Ovary (tissue), 10 donors: ENCODE measurements at regions of chr17 and their contacts with region 1.

Region 1: DNA sequence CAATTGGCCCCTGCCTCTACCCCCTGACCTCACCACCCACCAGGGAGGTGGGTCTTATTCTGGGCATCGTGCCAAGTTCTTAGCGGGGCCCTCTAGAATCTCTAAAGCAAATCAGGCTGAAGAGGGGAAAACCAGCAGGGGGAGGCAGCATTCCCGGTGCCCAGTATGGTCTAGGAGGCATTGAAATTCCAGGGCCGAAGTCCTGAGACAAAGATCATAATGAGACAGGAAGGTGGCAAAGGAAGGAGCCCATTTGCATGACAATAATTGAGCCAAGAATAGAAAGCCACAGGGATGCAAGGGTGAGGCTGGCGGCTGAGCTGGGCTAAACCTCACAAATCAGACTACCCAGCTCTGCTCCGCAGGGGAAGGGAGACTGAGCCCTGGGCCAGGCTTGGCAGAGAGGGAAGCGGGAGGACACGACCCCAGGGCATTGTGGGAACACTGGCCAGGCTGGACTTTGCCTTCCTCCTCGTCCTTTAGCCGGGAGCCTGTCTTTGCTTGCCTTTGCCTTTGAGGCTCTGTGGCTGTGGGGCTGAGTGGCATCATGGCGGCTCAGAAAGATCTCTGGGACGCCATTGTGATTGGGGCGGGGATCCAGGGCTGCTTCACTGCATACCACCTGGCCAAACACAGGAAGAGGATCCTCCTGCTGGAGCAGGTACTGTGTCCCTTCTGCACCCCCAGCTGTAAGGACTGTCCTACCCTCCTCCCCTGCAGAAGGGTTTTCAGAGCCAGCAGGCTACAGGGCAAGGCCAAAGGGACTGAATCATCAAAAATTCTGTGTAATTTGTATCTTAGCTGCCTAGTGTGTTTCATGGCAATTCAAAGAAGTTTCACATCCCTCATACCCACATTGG is at the start of gene PIPOX:
- DNase-seq: no peak
- H3K4me3 ChIP-seq: no peak within 1 kb of the TSS
- H3K27ac ChIP-seq: no peak within 1 kb of the TSS
- H3K4me1 ChIP-seq: peaks cover 3% of the 10 kb centered on the region
- H3K27me3 ChIP-seq: no peaks in the 10 kb centered on the region
- CTCF ChIP-seq: no peak
- EP300 ChIP-seq: no peak
- POLR2A ChIP-seq: no peak
- total RNA-seq, gene PIPOX: 1.3 to 4.9 (median 2.1) TPM

Region 2: DNA sequence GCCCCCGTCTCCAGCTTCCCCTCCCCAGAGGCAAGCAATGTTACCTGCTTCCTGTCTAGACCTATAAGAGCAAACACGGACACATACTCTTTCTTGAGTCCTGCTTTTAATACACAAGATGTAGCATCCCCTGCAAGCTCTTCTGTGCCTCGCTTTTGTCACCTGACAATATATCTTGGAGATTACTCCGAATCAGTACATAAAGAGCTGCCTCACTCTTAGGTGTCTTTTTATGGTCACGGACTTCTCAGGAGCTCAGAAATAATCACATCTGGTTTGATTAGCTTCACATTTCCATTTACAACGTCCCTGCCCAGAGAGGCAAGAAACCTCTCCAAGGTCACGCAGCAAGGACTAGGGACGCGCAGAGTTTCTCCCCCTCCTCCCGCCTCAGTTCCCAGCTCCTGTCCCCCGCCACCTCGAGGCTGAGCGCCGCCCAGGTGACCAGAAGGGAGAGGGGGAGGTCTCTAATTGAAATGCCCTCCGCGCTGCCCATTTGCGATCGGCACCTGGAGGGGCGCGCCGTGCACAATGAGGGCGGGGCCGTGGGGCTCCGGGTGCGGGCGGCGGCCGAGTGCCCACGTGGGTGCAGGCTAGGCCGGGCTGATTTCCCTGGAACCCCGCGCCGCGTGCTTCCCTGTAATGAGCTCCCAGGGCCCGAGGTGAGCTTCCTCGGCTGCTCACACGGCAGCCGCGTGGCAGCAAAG is 23.3 kb before region 1 on chr17:
- intact Hi-C with region 1: loop called in 1 of 4 experiments (anchors 2 kb)
- DNase-seq: no peak
- H3K4me3 ChIP-seq: no peak overlapping the region
- H3K27ac ChIP-seq: no peak overlapping the region
- H3K4me1 ChIP-seq: peaks cover 2% of the 10 kb centered on the region
- H3K27me3 ChIP-seq: no peaks in the 10 kb centered on the region
- CTCF ChIP-seq: no peak
- EP300 ChIP-seq: no peak
- POLR2A ChIP-seq: no peak

Region 3: DNA sequence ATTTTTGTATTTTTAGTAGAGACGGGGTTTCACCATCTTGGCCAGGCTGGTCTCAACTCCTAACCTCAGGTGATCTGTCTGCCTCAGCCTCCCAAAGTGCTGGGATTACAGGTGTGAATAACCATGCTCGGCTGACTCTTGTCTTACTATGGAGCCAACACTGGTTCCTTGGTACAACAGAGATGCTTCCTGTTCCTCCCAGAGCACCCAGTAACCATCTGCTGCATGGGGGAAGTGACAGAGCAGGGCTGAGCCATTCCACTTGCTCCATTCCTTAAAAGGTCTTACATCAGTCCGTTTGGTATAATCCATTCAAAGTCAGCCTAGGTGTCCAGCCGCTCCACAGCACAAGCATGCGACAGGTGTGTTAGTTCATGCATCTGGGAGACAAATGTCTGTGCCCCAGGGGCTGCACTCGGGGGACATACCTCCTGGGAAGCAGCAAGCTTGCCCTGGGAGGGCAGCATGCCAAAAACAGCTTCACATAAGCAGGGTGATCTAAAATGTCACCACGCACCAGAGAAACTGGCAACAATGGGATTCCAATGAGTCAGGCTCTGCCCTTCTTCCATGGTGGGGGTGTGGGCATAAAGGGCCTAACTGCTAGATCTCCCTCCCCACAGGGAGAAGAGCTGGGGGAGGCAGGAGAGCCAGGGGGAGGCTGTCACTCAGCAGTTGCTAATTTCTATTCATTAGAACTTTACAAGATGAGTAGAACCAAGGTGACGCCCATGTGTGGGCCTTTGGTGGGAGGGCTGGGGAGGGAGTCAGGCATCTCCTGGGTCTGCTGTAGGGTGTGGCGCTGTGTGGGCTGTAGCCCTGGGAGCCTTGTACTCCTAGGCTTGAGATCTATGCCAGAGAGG is 35.5 kb after region 1 on chr17:
- intact Hi-C with region 1: loop called in 1 of 4 experiments (anchors 1 kb)
- DNase-seq: no peak
- H3K4me3 ChIP-seq: no peak overlapping the region
- H3K27ac ChIP-seq: no peak overlapping the region
- H3K4me1 ChIP-seq: no peaks in the 10 kb centered on the region
- H3K27me3 ChIP-seq: no peaks in the 10 kb centered on the region
- CTCF ChIP-seq: no peak
- EP300 ChIP-seq: no peak
- POLR2A ChIP-seq: no peak

Region 4: GRCh38 chr17:29401258-29401657 is 358.3 kb after region 1 on chr17:
- intact Hi-C with region 1: no loop called
- DNase-seq: no peak
- H3K4me3 ChIP-seq: no peak overlapping the region
- H3K27ac ChIP-seq: no peak overlapping the region
- H3K4me1 ChIP-seq: peaks cover 2% of the 10 kb centered on the region
- H3K27me3 ChIP-seq: no peaks in the 10 kb centered on the region
- CTCF ChIP-seq: no peak
- EP300 ChIP-seq: no peak
- POLR2A ChIP-seq: no peak

Region 5: DNA sequence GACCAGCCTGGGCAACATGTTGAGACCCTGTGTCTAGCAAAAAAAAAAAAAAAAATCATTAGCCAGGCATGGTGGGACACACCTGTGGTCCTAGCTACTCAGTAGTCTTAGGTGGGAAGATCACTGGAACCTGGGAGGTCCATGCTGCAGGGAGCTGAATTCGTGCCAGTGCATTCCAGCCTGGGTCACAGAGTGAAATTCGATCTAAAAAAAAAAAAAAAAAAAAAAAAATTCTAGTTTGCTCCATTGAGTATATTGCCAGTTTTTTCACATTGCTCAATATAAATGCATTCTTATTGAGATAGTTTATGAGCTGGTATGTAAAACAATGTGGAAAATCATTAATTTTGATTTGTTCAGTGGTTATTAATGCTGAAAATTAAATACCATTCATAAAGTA is 471.9 kb after region 1 on chr17:
- intact Hi-C with region 1: no loop called
- DNase-seq: peak in 1 of 5 donors; percentile 43
- H3K4me3 ChIP-seq: no peak overlapping the region
- H3K27ac ChIP-seq: no peak overlapping the region
- H3K4me1 ChIP-seq: no peaks in the 10 kb centered on the region
- H3K27me3 ChIP-seq: no peaks in the 10 kb centered on the region
- CTCF ChIP-seq: no peak
- EP300 ChIP-seq: no peak
- POLR2A ChIP-seq: no peak